Activated B cell treated with CpG ODN at 0.5 μM for 24 hours (primary cell): ENCODE measurements at regions of chr2 and their contacts with region 1.

Region 1: GRCh38 chr2:186641807-186642321 is 52.0 kb upstream of the FAM171B start:
- DNase-seq: no peak
- ATAC-seq: peak; percentile 56
- H3K4me3 Mint-ChIP-seq: no peak overlapping the region
- H3K27ac Mint-ChIP-seq: no peak overlapping the region
- H3K4me1 Mint-ChIP-seq: no peaks in the 10 kb centered on the region
- H3K27me3 Mint-ChIP-seq: no peaks in the 10 kb centered on the region
- CTCF ChIP-seq: no peak

Region 2: GRCh38 chr2:185291035-185291647 is 1350.7 kb before region 1 on chr2:
- CTCF ChIA-PET with region 1: no interaction called
- POLR2A ChIA-PET with region 1: no interaction called
- intact Hi-C with region 1: loop called (anchors 5 kb)
- DNase-seq: no peak
- ATAC-seq: no peak
- H3K4me3 Mint-ChIP-seq: no peak overlapping the region
- H3K27ac Mint-ChIP-seq: no peak overlapping the region
- H3K4me1 Mint-ChIP-seq: no peaks in the 10 kb centered on the region
- H3K27me3 Mint-ChIP-seq: no peaks in the 10 kb centered on the region
- CTCF ChIP-seq: no peak

Region 3: DNA sequence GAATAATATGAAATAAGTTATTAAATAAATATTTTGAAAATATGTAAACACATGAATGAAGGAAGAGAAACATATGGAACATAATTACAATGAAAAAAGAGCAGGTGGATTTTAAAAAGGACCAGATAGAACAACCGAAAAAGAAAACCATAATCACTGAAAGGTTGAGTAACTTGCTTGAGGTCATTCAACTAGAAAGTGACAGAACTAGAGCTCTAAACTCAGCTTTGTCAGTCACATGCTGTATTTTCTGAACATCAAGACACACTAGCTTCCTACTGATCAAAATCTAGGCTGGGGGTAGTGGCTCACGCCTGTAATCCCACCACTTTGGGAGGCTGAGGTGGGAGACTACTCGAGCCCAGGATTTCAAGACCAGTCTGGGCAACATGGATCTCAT is 82.0 kb before region 1 on chr2:
- CTCF ChIA-PET with region 1: no interaction called
- POLR2A ChIA-PET with region 1: no interaction called
- intact Hi-C with region 1: no loop called
- DNase-seq: no peak
- ATAC-seq: no peak
- H3K4me3 Mint-ChIP-seq: no peak overlapping the region
- H3K27ac Mint-ChIP-seq: no peak overlapping the region
- H3K4me1 Mint-ChIP-seq: no peaks in the 10 kb centered on the region
- H3K27me3 Mint-ChIP-seq: no peaks in the 10 kb centered on the region
- CTCF ChIP-seq: no peak

Region 4: GRCh38 chr2:186717320-186718007 is 75.6 kb after region 1 on chr2:
- CTCF ChIA-PET with region 1: no interaction called
- POLR2A ChIA-PET with region 1: no interaction called
- intact Hi-C with region 1: no loop called
- DNase-seq: no peak
- ATAC-seq: no peak
- H3K4me3 Mint-ChIP-seq: no peak overlapping the region
- H3K27ac Mint-ChIP-seq: no peak overlapping the region
- H3K4me1 Mint-ChIP-seq: no peaks in the 10 kb centered on the region
- H3K27me3 Mint-ChIP-seq: no peaks in the 10 kb centered on the region
- CTCF ChIP-seq: no peak